Panc1 (cell line): ENCODE measurements at regions of chr1 and their contacts with region 1.

Region 1: DNA sequence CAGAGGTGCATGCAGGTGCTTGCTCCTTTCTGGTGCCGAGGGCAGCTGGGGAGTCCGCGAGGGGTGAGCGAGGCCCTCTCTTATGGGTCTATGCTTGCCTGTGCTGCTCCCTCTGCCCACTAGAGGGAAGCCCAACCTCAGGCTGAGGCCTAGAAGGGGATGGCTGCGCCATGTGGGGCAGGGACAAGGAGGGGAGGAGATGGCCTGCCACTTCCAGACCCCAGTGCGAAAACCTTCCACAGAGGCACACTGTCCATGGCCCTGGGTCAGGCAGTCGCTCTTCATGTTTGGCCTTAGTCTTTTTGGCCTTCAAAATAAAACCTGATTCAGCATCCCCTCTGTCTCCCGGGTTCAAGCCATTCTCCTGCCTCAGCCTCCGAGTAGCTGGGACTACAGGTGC is 14.0 kb downstream of the RHBG start:
- DNase-seq: peak; percentile 52
- ATAC-seq: peak; percentile 95
- H3K4me3 ChIP-seq: no peak overlapping the region
- H3K27ac ChIP-seq: no peak overlapping the region
- H3K4me1 ChIP-seq: no peaks in the 10 kb centered on the region
- H3K27me3 ChIP-seq: no peaks in the 10 kb centered on the region
- CTCF ChIP-seq: peak; percentile 96

Region 2: DNA sequence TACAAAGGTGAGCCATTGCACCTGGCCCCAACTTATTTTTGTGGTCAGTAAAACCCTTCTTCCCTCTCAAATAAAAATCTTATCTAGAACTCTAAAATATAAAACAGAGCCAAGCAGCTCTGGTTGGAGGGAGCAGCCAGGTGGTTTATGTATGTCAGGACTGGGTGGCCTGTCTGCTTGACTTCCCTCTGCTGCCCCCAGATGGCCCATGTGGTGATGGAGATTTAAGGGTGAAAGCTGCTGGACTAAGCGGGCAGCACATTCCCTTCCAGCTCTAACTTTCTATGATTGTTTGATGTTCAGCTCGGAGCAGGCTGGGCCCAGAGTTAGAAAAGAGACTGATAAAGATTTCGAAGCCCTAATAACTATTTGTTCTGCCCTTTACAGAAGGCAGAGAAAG is 123.2 kb before region 1 on chr1:
- CTCF ChIA-PET with region 1: no interaction called
- POLR2A ChIA-PET with region 1: no interaction called
- in situ Hi-C with region 1: no loop called
- intact Hi-C with region 1: no loop called
- DNase-seq: no peak
- ATAC-seq: no peak
- H3K4me3 ChIP-seq: no peak overlapping the region
- H3K27ac ChIP-seq: no peak overlapping the region
- H3K4me1 ChIP-seq: peaks cover 10% of the 10 kb centered on the region
- H3K27me3 ChIP-seq: no peaks in the 10 kb centered on the region
- CTCF ChIP-seq: no peak

Region 3: DNA sequence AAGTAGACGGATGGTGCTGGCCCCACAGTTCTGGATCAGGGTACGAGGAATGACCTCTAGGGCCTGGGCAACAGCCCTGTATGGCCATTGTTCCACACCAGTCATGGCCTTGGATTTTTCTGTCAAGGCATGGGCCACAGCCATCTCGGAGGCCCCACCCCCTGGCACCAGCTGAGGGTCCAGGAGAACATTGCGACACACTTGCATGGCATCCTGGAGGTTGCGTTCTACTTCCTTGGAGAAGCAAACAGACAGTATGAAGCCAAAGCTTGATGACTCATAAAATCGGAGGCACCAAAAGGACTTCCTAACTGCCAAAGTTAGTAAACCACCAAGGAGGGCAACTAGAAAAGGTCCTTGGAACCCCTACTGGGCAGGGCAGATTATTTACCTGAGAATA is 72.1 kb before region 1 on chr1:
- CTCF ChIA-PET with region 1: no interaction called
- POLR2A ChIA-PET with region 1: no interaction called
- in situ Hi-C with region 1: no loop called
- intact Hi-C with region 1: no loop called
- DNase-seq: no peak
- ATAC-seq: peak; percentile 43
- H3K4me3 ChIP-seq: no peak overlapping the region
- H3K27ac ChIP-seq: no peak overlapping the region
- H3K4me1 ChIP-seq: no peaks in the 10 kb centered on the region
- H3K27me3 ChIP-seq: no peaks in the 10 kb centered on the region
- CTCF ChIP-seq: no peak

Region 4: GRCh38 chr1:156356875-156357534 is 26.0 kb before region 1 on chr1:
- CTCF ChIA-PET with region 1: interaction called, 12 read pairs
- POLR2A ChIA-PET with region 1: no interaction called
- in situ Hi-C with region 1: no loop called
- intact Hi-C with region 1: no loop called
- DNase-seq: no peak
- ATAC-seq: peak; percentile 95
- H3K4me3 ChIP-seq: no peak overlapping the region; a peak in 1 of 4 replicates
- H3K27ac ChIP-seq: no peak overlapping the region
- H3K4me1 ChIP-seq: no peaks in the 10 kb centered on the region
- H3K27me3 ChIP-seq: no peaks in the 10 kb centered on the region
- CTCF ChIP-seq: peak; percentile 98

Region 5: DNA sequence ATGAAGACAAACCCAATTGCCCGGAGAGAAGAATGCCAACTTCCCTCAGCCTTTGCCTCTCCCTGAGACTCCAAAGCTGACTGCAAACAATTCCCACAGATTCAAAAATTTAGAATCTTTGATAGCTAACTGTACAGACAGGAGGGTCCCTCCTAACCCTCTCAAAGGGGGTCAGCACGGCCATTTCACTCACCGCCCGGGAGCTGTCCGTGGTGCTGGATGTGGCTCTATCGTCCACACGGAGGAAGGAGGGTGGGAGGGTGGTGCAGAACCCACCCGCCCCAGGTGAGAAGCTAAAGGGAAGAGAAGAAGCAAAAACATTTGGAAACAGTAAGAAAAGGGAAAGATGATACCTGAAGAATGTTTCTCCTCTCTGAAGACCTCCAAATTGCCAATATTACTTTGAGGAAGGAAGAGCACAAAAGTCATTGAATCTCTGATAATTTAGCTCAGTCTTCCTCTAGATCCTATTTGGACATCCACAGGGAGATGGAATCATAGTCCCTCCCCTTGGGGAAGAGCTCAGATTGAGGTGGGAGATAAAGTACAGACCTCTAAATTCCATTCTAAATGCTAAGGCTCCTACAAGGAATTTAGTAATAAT is 31.5 kb after region 1 on chr1:
- CTCF ChIA-PET with region 1: interaction called, 16 read pairs
- POLR2A ChIA-PET with region 1: no interaction called
- in situ Hi-C with region 1: no loop called
- intact Hi-C with region 1: no loop called
- DNase-seq: no peak
- ATAC-seq: no peak
- H3K4me3 ChIP-seq: no peak overlapping the region
- H3K27ac ChIP-seq: no peak overlapping the region
- H3K4me1 ChIP-seq: no peaks in the 10 kb centered on the region
- H3K27me3 ChIP-seq: no peaks in the 10 kb centered on the region; the same call in none of the 2 replicates
- CTCF ChIP-seq: no peak

Region 6: GRCh38 chr1:156436142-156437036 is 53.4 kb after region 1 on chr1:
- CTCF ChIA-PET with region 1: interaction called, 20 read pairs
- POLR2A ChIA-PET with region 1: no interaction called
- in situ Hi-C with region 1: no loop called
- intact Hi-C with region 1: no loop called
- DNase-seq: no peak
- ATAC-seq: peak; percentile 20
- H3K4me3 ChIP-seq: peak overlapping the region; percentile 35 to 44; a peak in 3 of 4 replicates
- H3K27ac ChIP-seq: no peak overlapping the region
- H3K4me1 ChIP-seq: no peaks in the 10 kb centered on the region; the same call in 1 of the 2 replicates
- H3K27me3 ChIP-seq: peaks cover 40% of the 10 kb centered on the region
- CTCF ChIP-seq: no peak

Region 7: GRCh38 chr1:156445789-156446263 is 62.8 kb after region 1 on chr1:
- CTCF ChIA-PET with region 1: interaction called, 99 read pairs
- POLR2A ChIA-PET with region 1: no interaction called
- in situ Hi-C with region 1: no loop called
- intact Hi-C with region 1: loop called (anchors 1 kb)
- DNase-seq: peak; percentile 67
- ATAC-seq: peak; percentile 94
- H3K4me3 ChIP-seq: no peak overlapping the region
- H3K27ac ChIP-seq: no peak overlapping the region
- H3K4me1 ChIP-seq: no peaks in the 10 kb centered on the region
- H3K27me3 ChIP-seq: peaks cover 10% of the 10 kb centered on the region
- CTCF ChIP-seq: peak; percentile 96

Region 8: DNA sequence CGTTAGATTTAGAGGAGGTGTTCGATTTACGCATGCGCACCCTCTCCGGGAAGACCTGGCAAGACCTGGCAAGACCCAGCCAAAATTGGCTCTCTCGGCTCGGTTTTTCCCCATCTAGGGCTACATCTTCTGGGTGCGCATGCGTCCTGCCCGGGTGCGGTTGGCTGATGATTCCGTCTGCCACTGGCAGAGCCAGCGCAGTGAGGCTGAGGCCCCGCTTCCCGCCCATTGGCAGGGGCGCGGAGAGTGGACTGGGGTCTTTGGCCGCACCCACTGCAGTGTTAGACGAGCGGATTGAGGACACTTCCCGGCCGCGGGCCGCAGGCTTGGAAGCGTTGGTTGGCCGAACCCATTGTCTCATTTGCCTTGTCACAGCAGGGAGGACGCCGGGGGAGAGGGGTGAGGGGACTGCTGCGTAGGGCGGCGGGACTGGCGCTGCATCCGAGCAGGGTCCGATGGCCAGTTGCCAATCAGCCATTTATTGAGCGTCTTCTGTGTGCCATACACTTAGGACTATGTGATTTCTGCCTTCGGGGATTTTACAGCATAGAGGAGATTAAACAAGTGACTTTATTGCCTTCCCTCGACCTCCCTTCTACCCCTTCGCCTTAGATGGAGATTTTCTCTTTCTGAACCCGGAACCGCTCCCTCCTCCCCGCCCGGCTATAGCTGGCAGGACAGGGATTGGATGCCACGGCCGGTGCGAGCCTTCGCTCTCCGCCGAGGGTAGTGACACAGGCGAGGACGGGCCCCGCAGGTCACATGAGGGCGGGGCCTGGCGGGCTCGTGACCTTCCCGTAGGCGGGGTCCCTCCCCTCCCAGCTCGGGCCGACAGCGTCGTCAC is 73.8 kb after region 1 on chr1:
- CTCF ChIA-PET with region 1: interaction called, 12 read pairs
- POLR2A ChIA-PET with region 1: interaction called, 5 read pairs
- in situ Hi-C with region 1: no loop called
- intact Hi-C with region 1: no loop called
- DNase-seq: peak; percentile 95
- ATAC-seq: peak; percentile 93
- H3K4me3 ChIP-seq: peak overlapping the region; percentile 70 to 83
- H3K27ac ChIP-seq: peak overlapping the region; percentile 98
- H3K4me1 ChIP-seq: peaks cover 7% of the 10 kb centered on the region; the same call in 1 of the 2 replicates
- H3K27me3 ChIP-seq: no peaks in the 10 kb centered on the region
- CTCF ChIP-seq: no peak; the same call in none of the 2 replicates

Region 9: DNA sequence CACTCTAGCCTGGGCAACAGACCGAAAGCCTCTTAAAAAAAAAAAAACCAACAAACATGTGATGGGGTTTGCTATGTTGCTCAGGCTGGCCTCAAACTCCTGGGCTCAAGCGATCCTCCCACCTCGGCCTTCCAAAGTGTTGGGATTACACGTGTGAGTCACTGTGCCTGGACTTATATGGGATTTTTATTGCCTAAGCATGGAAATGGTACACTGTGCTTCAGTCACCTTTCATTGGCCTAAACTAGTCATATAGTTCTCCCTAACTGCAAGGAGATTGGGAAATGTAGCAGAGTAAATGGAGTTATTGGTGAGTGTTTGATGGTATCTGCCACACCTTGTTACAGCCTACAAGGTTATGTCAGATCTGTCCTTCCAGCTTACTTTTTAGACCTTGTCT is 134.7 kb after region 1 on chr1:
- CTCF ChIA-PET with region 1: no interaction called
- POLR2A ChIA-PET with region 1: no interaction called
- in situ Hi-C with region 1: no loop called
- intact Hi-C with region 1: no loop called
- DNase-seq: no peak
- ATAC-seq: no peak
- H3K4me3 ChIP-seq: no peak overlapping the region
- H3K27ac ChIP-seq: no peak overlapping the region
- H3K4me1 ChIP-seq: no peaks in the 10 kb centered on the region
- H3K27me3 ChIP-seq: no peaks in the 10 kb centered on the region
- CTCF ChIP-seq: no peak

Region 10: DNA sequence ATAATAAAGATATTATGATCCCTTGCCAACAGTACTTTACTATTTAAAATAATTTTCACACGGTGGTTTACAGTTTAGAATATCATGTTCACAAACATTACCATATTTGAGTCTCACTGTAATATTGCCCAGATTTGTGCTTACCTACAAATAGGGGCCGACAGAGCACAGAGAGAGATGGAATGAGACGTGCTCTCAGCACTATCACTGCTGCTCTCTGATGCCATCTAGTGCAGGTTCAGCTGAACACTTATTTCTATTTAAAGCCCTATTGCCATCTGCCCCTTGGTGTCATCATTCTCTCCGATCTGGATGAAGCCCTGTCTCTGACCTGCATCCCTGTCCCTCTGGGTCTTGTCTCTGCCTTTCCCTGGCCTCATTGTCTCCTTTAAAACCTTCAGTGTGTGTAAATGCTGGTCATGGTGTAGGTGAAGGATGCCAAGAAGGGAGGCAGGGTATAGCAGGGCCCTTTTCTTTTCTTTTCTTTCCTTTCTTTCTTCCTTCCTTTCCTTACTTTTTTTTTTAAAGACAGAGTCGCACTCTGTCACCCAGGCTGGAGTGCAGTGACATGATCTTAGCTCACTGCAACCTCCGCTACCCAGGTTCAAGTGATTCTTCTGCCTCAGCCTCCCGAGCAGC is 225.1 kb after region 1 on chr1:
- CTCF ChIA-PET with region 1: interaction called, 11 read pairs
- POLR2A ChIA-PET with region 1: no interaction called
- in situ Hi-C with region 1: no loop called
- intact Hi-C with region 1: loop called (anchors 2 kb)
- DNase-seq: no peak
- ATAC-seq: peak; percentile 93
- H3K4me3 ChIP-seq: no peak overlapping the region
- H3K27ac ChIP-seq: no peak overlapping the region
- H3K4me1 ChIP-seq: 0 out of 2 replicates have a peak, but pooled peaks cover 5% of the 10 kb centered on the region
- H3K27me3 ChIP-seq: no peaks in the 10 kb centered on the region
- CTCF ChIP-seq: peak; percentile 90